T-cell (primary cell): ENCODE measurements at regions of chr7 and their contacts with region 1.

Region 1: DNA sequence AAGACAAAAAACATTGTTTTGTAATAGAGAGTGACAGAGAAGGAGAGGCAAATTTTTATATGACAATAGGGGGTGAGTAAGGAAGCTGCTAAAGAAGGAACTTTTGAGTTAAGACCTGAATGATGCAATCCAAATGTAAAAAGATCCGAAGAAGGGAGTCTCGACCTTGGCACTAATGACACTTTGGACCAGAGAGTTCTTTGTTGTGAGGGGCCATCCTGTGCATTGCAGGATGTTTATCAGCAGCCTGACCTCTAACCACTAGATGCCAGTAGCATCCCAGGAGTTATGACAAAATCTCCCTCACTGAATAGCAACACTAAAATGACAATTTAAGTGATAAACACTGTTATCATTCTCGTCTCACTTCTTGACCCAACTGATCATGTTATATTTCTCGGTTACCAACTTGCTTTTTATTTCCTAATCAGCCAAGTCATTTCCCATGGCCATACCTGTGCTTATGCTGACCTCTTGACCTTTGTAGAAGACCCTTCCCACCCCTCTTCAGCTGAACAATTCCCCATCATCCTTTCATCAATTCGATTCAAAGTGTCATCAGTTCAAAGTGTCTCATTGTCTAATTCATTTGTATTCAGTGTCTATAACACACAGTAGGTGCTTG is 30.0 kb downstream of the DGKI start:
- DNase-seq: no peak
- ATAC-seq: no peak
- H3K4me3 ChIP-seq: no peak overlapping the region
- H3K4me3 Mint-ChIP-seq: no peak overlapping the region
- H3K27ac ChIP-seq: no peak overlapping the region
- H3K27ac Mint-ChIP-seq: no peak overlapping the region
- H3K4me1 ChIP-seq: no peaks in the 10 kb centered on the region
- H3K4me1 Mint-ChIP-seq: no peaks in the 10 kb centered on the region
- H3K27me3 ChIP-seq: peaks cover 3 to 8% of the 10 kb centered on the region in 2 experiments
- H3K27me3 Mint-ChIP-seq: peaks cover 16 to 26% of the 10 kb centered on the region in 2 donors

Region 2: DNA sequence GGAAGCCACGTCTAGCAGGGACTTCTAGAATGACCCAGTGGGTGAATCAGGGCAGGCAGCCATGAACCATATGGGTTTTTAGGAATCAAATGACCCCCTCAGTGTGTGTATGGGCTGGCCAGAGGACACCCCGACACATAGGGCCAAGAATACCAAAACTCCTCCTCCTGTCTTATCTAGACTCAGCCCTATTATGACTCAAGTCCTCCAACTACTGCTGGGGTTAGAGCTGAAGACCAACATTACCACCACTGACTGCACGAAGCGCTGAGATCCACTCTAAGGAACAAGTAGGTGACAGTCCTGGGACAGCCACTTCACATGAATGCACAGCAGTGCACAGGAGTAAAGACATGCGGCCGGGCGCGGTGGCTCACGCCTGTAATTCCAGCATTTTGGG is 895.8 kb after region 1 on chr7:
- CTCF ChIA-PET with region 1: no interaction called
- POLR2A ChIA-PET with region 1: interaction called in 1 of 2 experiments, 10 read pairs
- DNase-seq: no peak
- ATAC-seq: no peak
- H3K4me3 ChIP-seq: no peak overlapping the region
- H3K4me3 Mint-ChIP-seq: no peak overlapping the region
- H3K27ac ChIP-seq: no peak overlapping the region
- H3K27ac Mint-ChIP-seq: no peak overlapping the region
- H3K4me1 ChIP-seq: peaks cover 0 to 3% of the 10 kb centered on the region in 2 experiments
- H3K4me1 Mint-ChIP-seq: peaks cover 11 to 19% (median 16%) of the 10 kb centered on the region in 3 donors
- H3K27me3 ChIP-seq: peaks cover 0 to 18% of the 10 kb centered on the region in 2 experiments
- H3K27me3 Mint-ChIP-seq: peaks cover 0 to 22% of the 10 kb centered on the region in 2 donors